ENCODE measurements at regions of chr9 and their contacts with region 1.

Region 1: DNA sequence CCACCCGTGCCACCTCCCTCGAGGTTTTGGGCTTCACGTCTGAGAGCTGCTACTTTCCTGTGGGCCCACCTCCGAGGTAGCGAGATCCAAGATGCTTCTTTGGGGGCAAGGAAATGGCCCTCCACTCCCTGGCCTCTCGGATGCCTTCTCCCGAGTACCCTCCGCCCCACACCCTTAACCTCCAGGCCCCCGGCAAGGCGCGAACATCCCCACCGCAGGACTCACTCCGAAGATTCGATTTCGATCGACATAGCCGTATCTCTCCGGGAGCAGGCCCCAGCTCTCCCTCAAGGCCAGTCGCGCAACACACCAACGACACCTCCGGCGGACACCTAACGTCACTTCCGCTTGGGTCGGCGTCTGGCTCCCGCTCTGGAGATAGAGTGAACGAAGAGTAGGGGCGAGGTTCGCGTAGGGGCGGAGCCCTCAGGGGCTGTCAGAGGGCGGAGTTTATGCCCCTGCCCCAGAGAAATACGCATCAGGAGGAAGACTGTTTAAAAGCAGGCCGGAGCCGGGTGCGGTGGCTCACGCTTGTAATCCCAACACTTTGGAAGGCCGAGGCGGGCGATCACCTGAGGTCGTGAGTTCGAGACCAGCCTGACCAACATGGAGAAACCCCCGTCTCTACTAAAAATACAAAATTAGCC is at the start of gene SMU1:
- DNase-seq: peak; percentile 99
- H3K4me3 ChIP-seq: peak within 1 kb of the TSS; percentile 63
- H3K27ac ChIP-seq: peak within 1 kb of the TSS; percentile 90
- H3K4me1 ChIP-seq: peaks cover 4% of the 10 kb centered on the region
- H3K27me3 ChIP-seq: no peaks in the 10 kb centered on the region
- CTCF ChIP-seq: no peak
- total RNA-seq, gene SMU1: 30.6 and 31.2 TPM in 2 replicates

Region 2: DNA sequence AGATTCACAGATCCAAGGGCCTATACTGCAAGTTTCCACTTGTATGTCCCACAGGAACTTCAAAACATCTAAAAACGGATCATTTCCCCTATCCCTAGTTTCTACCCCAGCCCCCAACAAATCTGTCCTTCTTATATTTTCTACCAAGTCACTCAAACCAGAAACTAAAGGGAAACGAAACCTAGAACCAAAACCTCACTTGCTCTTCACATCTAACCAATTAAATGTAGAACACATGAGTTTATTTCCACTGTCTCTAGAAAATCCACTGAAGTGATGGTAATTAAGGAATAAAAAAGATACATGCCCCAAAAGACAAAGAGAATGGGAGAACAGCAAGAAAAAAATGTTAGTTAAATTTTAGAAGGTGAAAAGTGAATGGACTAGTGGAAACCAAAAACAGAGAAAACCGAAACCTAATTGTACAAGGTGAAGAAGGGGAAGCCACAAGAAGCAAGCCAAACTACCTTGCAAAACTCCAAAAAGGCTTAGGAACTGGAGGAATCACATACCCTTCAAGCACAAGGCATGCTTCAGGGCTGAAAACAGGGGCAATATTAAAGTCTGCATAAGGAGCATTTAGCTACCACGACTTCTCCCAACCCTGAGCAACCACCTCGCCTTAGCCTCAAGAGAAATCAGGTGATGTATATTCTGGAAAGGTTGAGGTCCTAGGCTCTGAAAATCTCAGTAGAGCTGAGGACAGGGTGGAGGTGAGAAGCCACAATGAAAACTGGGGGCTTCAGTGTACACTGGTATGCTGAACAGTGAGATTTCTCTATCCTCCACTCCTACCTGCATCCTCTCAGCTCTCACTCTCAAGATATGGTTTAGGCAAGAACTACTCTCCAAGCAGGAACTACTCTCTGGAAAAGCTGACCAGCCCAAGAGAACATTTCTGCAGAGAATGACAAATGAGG is 11.1 kb before region 1 on chr9:
- CTCF ChIA-PET with region 1: no interaction called
- POLR2A ChIA-PET with region 1: interaction called, 20 read pairs
- intact Hi-C with region 1: no loop called
- DNase-seq: no peak
- H3K4me3 ChIP-seq: no peak overlapping the region
- H3K27ac ChIP-seq: no peak overlapping the region
- H3K4me1 ChIP-seq: no peaks in the 10 kb centered on the region
- H3K27me3 ChIP-seq: no peaks in the 10 kb centered on the region
- CTCF ChIP-seq: no peak

Region 3: DNA sequence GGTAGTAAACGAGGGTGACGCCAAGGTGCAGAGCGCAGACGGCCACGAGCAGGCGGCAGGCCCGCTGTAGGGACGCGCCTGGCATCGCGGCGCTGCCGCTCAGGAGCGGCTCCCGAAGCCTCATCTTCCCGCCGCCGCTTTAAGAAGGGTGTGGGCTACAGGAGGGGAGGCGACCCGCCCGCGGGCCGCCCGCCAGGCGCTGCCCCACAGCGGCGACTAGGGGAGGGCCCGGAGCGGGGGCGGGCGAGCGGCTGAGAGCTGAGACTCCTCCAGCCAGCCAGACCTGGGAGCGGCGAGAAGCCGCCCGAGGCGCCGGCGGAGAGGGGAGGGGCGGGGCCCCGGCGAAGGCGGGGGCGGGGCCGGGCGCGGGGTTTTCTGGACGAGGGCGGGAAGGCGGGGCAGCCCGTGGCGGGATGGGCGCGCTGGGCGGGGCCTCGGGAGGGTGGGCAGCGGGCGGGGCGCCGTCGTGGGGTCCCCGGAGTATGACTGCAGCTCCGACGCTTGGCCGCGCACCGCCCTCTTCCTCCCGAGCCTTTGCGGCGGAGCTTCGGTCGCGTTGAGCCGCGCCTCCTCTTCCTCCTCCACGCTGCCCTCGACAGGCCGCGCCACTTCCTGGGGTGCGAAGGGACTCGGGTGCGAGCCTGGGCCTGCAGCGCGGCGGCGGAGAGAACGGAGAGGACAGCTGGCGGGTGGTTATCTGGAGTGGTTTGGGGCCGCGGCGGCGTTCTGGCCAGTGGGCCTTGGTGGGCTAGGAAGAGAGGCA is 90.7 kb after region 1 on chr9 and contains the start of gene B4GALT1:
- CTCF ChIA-PET with region 1: no interaction called
- POLR2A ChIA-PET with region 1: no interaction called
- intact Hi-C with region 1: loop called (anchors 2 kb)
- DNase-seq: peak; percentile 92
- H3K4me3 ChIP-seq: peak within 1 kb of the TSS; percentile 95
- H3K27ac ChIP-seq: peak within 1 kb of the TSS; percentile 91
- H3K4me1 ChIP-seq: peaks cover 46% of the 10 kb centered on the region
- H3K27me3 ChIP-seq: no peaks in the 10 kb centered on the region
- CTCF ChIP-seq: no peak
- total RNA-seq, gene B4GALT1: 31.0 and 32.0 TPM in 2 replicates

Region 4: GRCh38 chr9:33202552-33203201 is 126.2 kb after region 1 on chr9:
- CTCF ChIA-PET with region 1: no interaction called
- POLR2A ChIA-PET with region 1: interaction called, 12 read pairs
- intact Hi-C with region 1: no loop called
- DNase-seq: no peak
- H3K4me3 ChIP-seq: no peak overlapping the region
- H3K27ac ChIP-seq: no peak overlapping the region
- H3K4me1 ChIP-seq: no peaks in the 10 kb centered on the region
- H3K27me3 ChIP-seq: peaks cover 7% of the 10 kb centered on the region
- CTCF ChIP-seq: no peak

Region 5: DNA sequence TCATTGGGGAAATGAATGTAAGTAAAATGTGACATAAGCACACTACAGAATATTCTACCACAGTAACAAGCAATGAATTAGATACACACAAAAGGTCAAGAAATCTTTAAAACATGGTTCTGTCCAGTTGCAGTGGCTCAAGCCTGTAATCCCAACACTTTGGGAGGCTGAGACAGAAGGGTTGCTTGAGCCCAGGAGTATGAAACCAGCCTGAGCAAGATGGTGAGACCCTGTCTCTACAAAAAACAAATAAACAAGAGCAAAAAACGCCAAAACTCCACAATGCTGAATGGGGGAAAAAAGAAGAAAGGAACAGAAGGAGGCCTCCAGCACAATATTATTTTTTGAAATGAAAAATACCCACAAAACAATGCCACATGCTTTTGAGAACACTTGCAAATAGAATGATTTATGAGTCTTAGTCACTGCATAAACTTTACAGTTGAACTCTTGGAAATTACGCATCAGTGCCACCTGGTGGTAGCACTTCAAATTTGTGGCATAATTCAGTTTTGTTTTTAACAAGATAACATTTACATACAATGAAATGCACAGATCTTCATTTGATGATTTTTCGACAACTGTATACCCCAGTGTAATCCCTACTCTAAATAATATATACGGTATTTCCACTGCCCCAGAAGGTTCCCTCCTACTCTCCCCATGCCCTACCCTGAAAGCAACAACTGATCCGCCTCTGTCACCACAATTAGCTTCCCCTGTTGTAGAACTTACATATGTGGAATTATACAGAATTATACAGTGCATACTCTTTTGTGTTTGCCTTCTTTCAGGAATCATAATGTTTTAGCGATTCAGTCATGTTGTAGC is 149.1 kb after region 1 on chr9:
- CTCF ChIA-PET with region 1: no interaction called
- POLR2A ChIA-PET with region 1: no interaction called
- intact Hi-C with region 1: loop called (anchors 1 kb)
- DNase-seq: peak; percentile 82
- H3K4me3 ChIP-seq: no peak overlapping the region
- H3K27ac ChIP-seq: no peak overlapping the region
- H3K4me1 ChIP-seq: peaks cover 10% of the 10 kb centered on the region
- H3K27me3 ChIP-seq: no peaks in the 10 kb centered on the region
- CTCF ChIP-seq: peak; percentile 79